Heart right ventricle (tissue), 16 donors: ENCODE measurements at regions of chr7 and their contacts with region 1.

Region 1: DNA sequence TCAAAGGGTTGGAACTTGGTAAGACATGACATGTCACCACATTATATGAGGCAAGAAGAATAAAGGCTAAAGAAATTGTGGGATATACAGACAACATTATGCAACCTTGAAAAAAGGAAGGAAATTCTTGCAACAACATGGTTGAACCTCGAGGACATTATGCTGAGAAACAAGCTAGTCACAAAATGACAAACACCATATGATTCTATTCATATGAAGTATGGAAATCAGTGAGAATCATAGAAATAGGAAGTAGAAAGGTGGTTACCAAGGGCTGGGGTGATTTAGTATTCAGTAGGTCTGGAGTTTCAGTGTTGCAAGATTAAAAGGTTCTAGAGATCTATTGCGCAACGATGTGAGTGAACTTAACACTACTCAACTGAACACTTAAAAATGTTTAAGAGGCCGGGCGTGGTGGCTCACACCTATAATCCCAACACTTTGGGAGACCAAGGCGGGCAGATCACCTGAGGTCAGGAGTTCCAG is 126.9 kb upstream of the TBX20 start:
- DNase-seq: no peak
- ATAC-seq: peak in 1 of 8 donors; percentile 8
- H3K4me3 ChIP-seq: no peak overlapping the region
- H3K27ac ChIP-seq: no peak overlapping the region
- H3K4me1 ChIP-seq: peaks cover 0 to 12% (median 7%) of the 10 kb centered on the region in 9 donors
- H3K27me3 ChIP-seq: no peaks in the 10 kb centered on the region
- CTCF ChIP-seq: no peak

Region 2: GRCh38 chr7:35313575-35313974 is 67.2 kb before region 1 on chr7:
- intact Hi-C with region 1: loop called in 1 of 10 experiments (anchors 10 kb)
- DNase-seq: peak in 1 of 2 donors; percentile 33
- ATAC-seq: peak; percentile 65 to 96 (median 82)
- H3K4me3 ChIP-seq: peak overlapping the region in 2 of 10 donors; percentile 7 to 18
- H3K27ac ChIP-seq: peak overlapping the region in 1 of 10 donors; percentile 6
- H3K4me1 ChIP-seq: peaks cover 0 to 14% (median 0%) of the 10 kb centered on the region in 9 donors
- H3K27me3 ChIP-seq: no peaks in the 10 kb centered on the region
- CTCF ChIP-seq: no peak

Region 3: DNA sequence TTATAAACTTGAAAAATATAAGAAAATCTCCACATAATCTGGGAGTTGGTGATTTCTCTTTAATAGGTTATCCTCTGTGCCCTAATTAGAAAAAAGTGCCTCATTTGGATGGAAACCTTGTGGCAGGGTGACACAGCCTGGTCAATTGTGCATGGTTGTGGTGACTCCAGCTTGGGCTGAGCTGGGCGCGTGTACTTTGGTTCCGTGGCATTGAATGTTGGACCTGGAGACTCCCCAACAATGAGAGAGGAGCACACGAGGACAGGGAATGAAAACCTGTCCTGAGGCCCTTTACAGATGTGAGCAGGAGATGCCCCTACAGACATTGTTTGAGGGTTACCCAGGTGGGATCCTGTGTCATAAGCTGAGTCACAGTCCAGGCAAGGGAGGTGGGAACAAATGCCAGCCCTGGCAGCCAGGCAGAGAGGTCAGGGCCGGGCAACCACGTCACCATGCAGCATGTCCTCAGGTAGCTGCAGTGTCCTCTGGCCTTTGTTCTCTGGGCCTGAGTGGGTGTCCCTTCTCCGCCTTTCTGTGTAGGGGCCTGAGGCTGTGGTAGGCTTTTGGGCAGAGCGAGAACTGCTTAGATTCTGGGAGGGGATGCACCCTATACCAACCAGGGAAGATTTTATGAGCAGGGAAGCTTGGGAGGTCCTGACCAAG is 20.6 kb after region 1 on chr7:
- intact Hi-C with region 1: loop called in 1 of 10 experiments (anchors 2 kb)
- DNase-seq: no peak
- ATAC-seq: peak in 4 of 8 donors; percentile 55 to 83 (median 64)
- H3K4me3 ChIP-seq: no peak overlapping the region
- H3K27ac ChIP-seq: no peak overlapping the region
- H3K4me1 ChIP-seq: peaks cover 0 to 11% (median 0%) of the 10 kb centered on the region in 9 donors
- H3K27me3 ChIP-seq: peaks cover 0 to 4% (median 0%) of the 10 kb centered on the region in 7 donors
- CTCF ChIP-seq: no peak

Region 4: DNA sequence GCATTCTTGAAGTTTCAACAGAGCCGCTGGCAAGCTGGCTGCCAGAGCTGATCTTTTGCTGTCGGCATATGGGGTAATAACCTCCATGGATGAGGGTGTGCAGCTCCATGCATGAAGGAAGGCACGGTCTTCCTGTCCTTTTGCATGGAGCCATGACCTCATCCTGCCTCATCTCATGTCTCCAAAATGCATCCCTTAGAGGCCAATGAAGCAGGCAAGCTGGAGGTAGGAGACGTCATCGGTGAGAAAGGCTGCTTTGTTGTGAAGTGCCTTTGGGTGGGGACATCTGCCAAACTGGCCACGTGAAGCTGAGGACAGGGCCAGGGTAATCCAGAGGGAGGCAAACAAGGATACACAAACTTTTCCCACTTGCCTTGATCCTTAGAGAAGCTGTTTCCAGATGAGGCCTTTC is 34.6 kb after region 1 on chr7:
- intact Hi-C with region 1: loop called in 1 of 10 experiments (anchors 1 kb)
- DNase-seq: peak; percentile 70 to 80
- ATAC-seq: peak; percentile 79 to 91 (median 83)
- H3K4me3 ChIP-seq: no peak overlapping the region
- H3K27ac ChIP-seq: peak overlapping the region in 7 of 10 donors; percentile 37 to 64 (median 57)
- H3K4me1 ChIP-seq: peaks cover 0 to 67% (median 30%) of the 10 kb centered on the region in 9 donors
- H3K27me3 ChIP-seq: peaks cover 0 to 2% (median 0%) of the 10 kb centered on the region in 7 donors
- CTCF ChIP-seq: no peak